Natural killer cell (primary cell): ENCODE measurements at regions of chr7 and their contacts with region 1.

Region 1: GRCh38 chr7:108146070-108146837 is 16.1 kb upstream of the LAMB4 start:
- DNase-seq: peak in 1 of 2 donors; percentile 65
- ATAC-seq: peak in 2 of 3 donors; percentile 54 to 75
- H3K4me3 ChIP-seq: no peak overlapping the region
- H3K4me3 Mint-ChIP-seq: no peak overlapping the region
- H3K27ac ChIP-seq: no peak overlapping the region
- H3K27ac Mint-ChIP-seq: no peak overlapping the region
- H3K4me1 ChIP-seq: peaks cover 4% of the 10 kb centered on the region
- H3K4me1 Mint-ChIP-seq: no peaks in the 10 kb centered on the region
- H3K27me3 ChIP-seq: no peaks in the 10 kb centered on the region
- H3K27me3 Mint-ChIP-seq: peaks cover 6 to 40% of the 10 kb centered on the region in 2 donors
- CTCF ChIP-seq: peak; percentile 60

Region 2: GRCh38 chr7:106367018-106367420 is 1779.2 kb before region 1 on chr7:
- intact Hi-C with region 1: no loop called
- DNase-seq: peak in 1 of 2 donors; percentile 26
- ATAC-seq: peak in 2 of 3 donors; percentile 52 to 79
- H3K4me3 ChIP-seq: no peak overlapping the region
- H3K4me3 Mint-ChIP-seq: no peak overlapping the region
- H3K27ac ChIP-seq: no peak overlapping the region
- H3K27ac Mint-ChIP-seq: no peak overlapping the region
- H3K4me1 ChIP-seq: no peaks in the 10 kb centered on the region
- H3K4me1 Mint-ChIP-seq: no peaks in the 10 kb centered on the region
- H3K27me3 ChIP-seq: no peaks in the 10 kb centered on the region
- H3K27me3 Mint-ChIP-seq: peaks cover 4 to 7% of the 10 kb centered on the region in 2 donors
- CTCF ChIP-seq: no peak

Region 3: DNA sequence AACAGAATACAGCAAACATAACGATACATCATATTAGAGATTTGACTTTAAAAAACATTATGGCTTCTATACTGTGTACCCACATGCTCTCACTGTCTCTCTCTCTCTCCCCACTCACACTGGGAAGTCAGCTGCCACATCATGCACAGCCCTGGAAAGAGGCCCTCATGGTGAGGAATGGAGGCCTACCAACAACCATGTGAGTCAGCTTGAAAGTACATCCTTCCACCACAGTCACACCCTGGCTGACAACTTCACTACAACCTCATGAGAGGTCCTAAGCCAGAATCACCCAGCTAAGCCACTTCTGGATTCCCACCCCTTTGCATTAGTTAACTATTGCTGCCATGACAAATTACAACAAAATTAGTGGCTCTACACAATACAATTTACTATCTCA is 699.7 kb before region 1 on chr7:
- intact Hi-C with region 1: no loop called
- DNase-seq: no peak
- ATAC-seq: no peak
- H3K4me3 ChIP-seq: no peak overlapping the region
- H3K4me3 Mint-ChIP-seq: no peak overlapping the region
- H3K27ac ChIP-seq: no peak overlapping the region
- H3K27ac Mint-ChIP-seq: no peak overlapping the region
- H3K4me1 ChIP-seq: no peaks in the 10 kb centered on the region
- H3K4me1 Mint-ChIP-seq: peaks cover 11 to 21% of the 10 kb centered on the region in 2 donors
- H3K27me3 ChIP-seq: no peaks in the 10 kb centered on the region
- H3K27me3 Mint-ChIP-seq: no peaks in the 10 kb centered on the region
- CTCF ChIP-seq: no peak

Region 4: DNA sequence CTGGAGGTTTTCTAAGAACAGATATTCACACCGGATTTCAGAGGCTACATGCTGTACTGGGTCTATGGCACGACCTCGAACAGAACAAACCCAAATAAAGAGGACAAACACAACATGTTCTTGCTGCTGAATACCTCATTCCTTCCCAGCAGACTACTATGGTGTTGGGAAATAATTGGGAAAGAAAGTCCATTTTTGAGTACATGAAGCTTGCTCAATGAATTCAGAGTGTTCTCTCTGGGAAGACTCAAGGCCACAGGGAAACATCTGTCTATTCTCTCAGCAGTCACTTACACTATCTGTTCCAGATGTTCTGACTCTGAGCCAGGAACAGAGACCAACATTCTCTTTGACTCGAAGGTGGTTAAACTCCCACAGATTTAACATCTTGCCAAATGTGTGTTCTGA is 174.2 kb before region 1 on chr7:
- intact Hi-C with region 1: no loop called
- DNase-seq: no peak
- ATAC-seq: no peak
- H3K4me3 ChIP-seq: no peak overlapping the region
- H3K4me3 Mint-ChIP-seq: no peak overlapping the region
- H3K27ac ChIP-seq: no peak overlapping the region
- H3K27ac Mint-ChIP-seq: no peak overlapping the region
- H3K4me1 ChIP-seq: no peaks in the 10 kb centered on the region
- H3K4me1 Mint-ChIP-seq: no peaks in the 10 kb centered on the region
- H3K27me3 ChIP-seq: no peaks in the 10 kb centered on the region
- H3K27me3 Mint-ChIP-seq: peaks cover 0 to 5% of the 10 kb centered on the region in 2 donors
- CTCF ChIP-seq: no peak

Region 5: DNA sequence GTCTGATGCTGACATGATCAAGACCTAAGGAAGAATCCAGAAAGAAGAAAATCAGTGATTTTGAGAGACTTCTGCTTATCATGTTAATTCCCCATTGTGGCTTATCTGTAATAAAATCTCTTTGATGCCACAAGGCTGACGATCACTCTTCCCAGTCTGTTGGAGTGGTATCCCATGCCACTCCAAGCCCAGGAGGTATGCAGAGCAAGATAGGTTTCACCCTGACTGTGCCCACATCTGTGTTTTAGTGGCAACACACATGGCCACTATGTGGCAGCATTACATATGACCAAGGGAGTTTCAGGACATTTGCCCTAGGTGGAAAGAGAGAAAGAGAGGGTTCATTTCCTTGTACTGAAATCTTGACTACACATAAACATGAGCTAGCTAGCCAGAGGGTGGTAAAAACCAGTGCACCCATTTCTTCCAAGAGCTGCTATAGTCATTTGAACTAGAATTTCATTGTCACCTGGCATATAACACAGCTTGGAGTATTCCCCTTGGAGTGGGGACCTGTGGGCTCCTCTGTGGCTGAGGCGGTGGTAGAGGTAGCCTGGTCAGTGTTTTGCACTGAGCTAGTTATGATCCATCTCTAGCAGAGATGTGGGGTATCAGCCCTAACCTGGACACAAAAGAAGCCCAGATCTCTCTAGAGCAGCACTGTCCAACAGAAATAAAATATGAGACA is 36.9 kb before region 1 on chr7:
- intact Hi-C with region 1: loop called (anchors 1 kb)
- DNase-seq: peak in 1 of 2 donors; percentile 26
- ATAC-seq: peak in 1 of 3 donors; percentile 56
- H3K4me3 ChIP-seq: no peak overlapping the region
- H3K4me3 Mint-ChIP-seq: no peak overlapping the region
- H3K27ac ChIP-seq: no peak overlapping the region
- H3K27ac Mint-ChIP-seq: no peak overlapping the region
- H3K4me1 ChIP-seq: no peaks in the 10 kb centered on the region
- H3K4me1 Mint-ChIP-seq: no peaks in the 10 kb centered on the region
- H3K27me3 ChIP-seq: no peaks in the 10 kb centered on the region
- H3K27me3 Mint-ChIP-seq: no peaks in the 10 kb centered on the region
- CTCF ChIP-seq: no peak